GM10248 (cell line): ENCODE measurements at regions of chr19 and their contacts with region 1.

Region 1: GRCh38 chr19:16041299-16041990 is 34.9 kb upstream of the TPM4 start:
- DNase-seq: peak; percentile 86
- CTCF ChIP-seq: peak; percentile 93

Region 2: GRCh38 chr19:16018801-16019551 is 22.5 kb before region 1 on chr19:
- CTCF ChIA-PET with region 1: no interaction called
- POLR2A ChIA-PET with region 1: no interaction called
- DNase-seq: no peak
- CTCF ChIP-seq: no peak

Region 3: GRCh38 chr19:16076154-16076957 is 34.9 kb after region 1 on chr19 and contains the start of gene TPM4:
- CTCF ChIA-PET with region 1: interaction called, 10 read pairs
- POLR2A ChIA-PET with region 1: no interaction called
- DNase-seq: peak; percentile 90
- CTCF ChIP-seq: no peak